ENCODE measurements at regions of chr2 and their contacts with region 1.

Region 1: DNA sequence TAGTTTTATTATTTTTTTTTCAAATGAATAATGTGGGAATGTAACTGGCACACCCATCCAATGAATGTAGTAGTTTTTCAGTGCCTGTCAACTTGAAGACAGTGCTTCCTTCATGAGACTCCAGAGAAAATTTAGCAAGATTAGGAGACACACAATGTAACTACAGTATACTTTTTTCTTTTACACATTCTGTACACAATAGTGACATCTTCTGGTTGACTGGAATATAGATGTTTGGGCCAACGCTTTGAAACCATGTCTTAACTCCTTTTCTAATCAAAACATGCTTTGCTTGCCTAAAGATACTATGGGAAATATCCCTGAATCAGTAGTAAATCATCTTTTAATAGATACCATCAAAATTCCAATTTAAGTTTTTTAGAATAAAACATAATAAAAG is 229.5 kb upstream of the ZC3H15 start:
- DNase-seq: peak; percentile 66
- H3K4me3 ChIP-seq: no peak overlapping the region
- H3K27ac ChIP-seq: no peak overlapping the region
- H3K4me1 ChIP-seq: no peaks in the 10 kb centered on the region
- H3K27me3 ChIP-seq: no peaks in the 10 kb centered on the region
- CTCF ChIP-seq: peak; percentile 69

Region 2: GRCh38 chr2:185208261-185208660 is 1048.3 kb before region 1 on chr2:
- CTCF ChIA-PET with region 1: no interaction called
- POLR2A ChIA-PET with region 1: no interaction called
- intact Hi-C with region 1: loop called (anchors 10 kb)
- DNase-seq: peak; percentile 62
- H3K4me3 ChIP-seq: no peak overlapping the region
- H3K27ac ChIP-seq: no peak overlapping the region
- H3K4me1 ChIP-seq: no peaks in the 10 kb centered on the region
- H3K27me3 ChIP-seq: no peaks in the 10 kb centered on the region
- CTCF ChIP-seq: peak; percentile 66

Region 3: GRCh38 chr2:185291035-185291647 is 965.4 kb before region 1 on chr2:
- CTCF ChIA-PET with region 1: no interaction called
- POLR2A ChIA-PET with region 1: no interaction called
- intact Hi-C with region 1: loop called (anchors 5 kb)
- DNase-seq: peak; percentile 64
- H3K4me3 ChIP-seq: no peak overlapping the region
- H3K27ac ChIP-seq: no peak overlapping the region
- H3K4me1 ChIP-seq: no peaks in the 10 kb centered on the region
- H3K27me3 ChIP-seq: no peaks in the 10 kb centered on the region
- CTCF ChIP-seq: peak; percentile 74

Region 4: GRCh38 chr2:185608799-185609198 is 647.7 kb before region 1 on chr2:
- CTCF ChIA-PET with region 1: no interaction called
- POLR2A ChIA-PET with region 1: no interaction called
- intact Hi-C with region 1: loop called (anchors 10 kb)
- DNase-seq: peak; percentile 3
- H3K4me3 ChIP-seq: no peak overlapping the region
- H3K27ac ChIP-seq: no peak overlapping the region
- H3K4me1 ChIP-seq: no peaks in the 10 kb centered on the region
- H3K27me3 ChIP-seq: no peaks in the 10 kb centered on the region
- CTCF ChIP-seq: 0 out of 2 replicates have a peak, but pooled peaks have one; percentile 25

Region 5: GRCh38 chr2:186241873-186242272 is 14.7 kb before region 1 on chr2:
- CTCF ChIA-PET with region 1: no interaction called
- POLR2A ChIA-PET with region 1: no interaction called
- intact Hi-C with region 1: no loop called
- DNase-seq: no peak
- H3K4me3 ChIP-seq: no peak overlapping the region
- H3K27ac ChIP-seq: no peak overlapping the region
- H3K4me1 ChIP-seq: no peaks in the 10 kb centered on the region
- H3K27me3 ChIP-seq: no peaks in the 10 kb centered on the region
- CTCF ChIP-seq: no peak

Region 6: GRCh38 chr2:187124529-187125160 is 868.1 kb after region 1 on chr2:
- CTCF ChIA-PET with region 1: no interaction called
- POLR2A ChIA-PET with region 1: no interaction called
- intact Hi-C with region 1: no loop called
- DNase-seq: no peak
- H3K4me3 ChIP-seq: no peak overlapping the region
- H3K27ac ChIP-seq: no peak overlapping the region
- H3K4me1 ChIP-seq: peaks cover 18% of the 10 kb centered on the region
- H3K27me3 ChIP-seq: no peaks in the 10 kb centered on the region
- CTCF ChIP-seq: no peak

Measured in A673 (cell line).